GM12878 (cell line): ENCODE measurements at regions of chr17 and their contacts with region 1.

Region 1: GRCh38 chr17:77054936-77055335 is 85.8 kb upstream of the SEC14L1 start:
- DNase-seq: no peak
- ATAC-seq: no peak
- H3K4me3 ChIP-seq: no peak overlapping the region
- H3K27ac ChIP-seq: no peak overlapping the region
- H3K4me1 ChIP-seq: no peaks in the 10 kb centered on the region
- H3K27me3 ChIP-seq: peaks cover 0 to 4% of the 10 kb centered on the region in 2 experiments; a peak in 2 of 4 replicates
- CTCF ChIP-seq: no peak
- EP300 ChIP-seq: no peak
- POLR2A ChIP-seq: no peak
- RAD21 ChIP-seq: no peak

Region 2: GRCh38 chr17:76816590-76817135 is 238.3 kb before region 1 on chr17:
- CTCF ChIA-PET with region 1: interaction called, 10 read pairs
- POLR2A ChIA-PET with region 1: no interaction called
- RAD21 ChIA-PET with region 1: interaction called, 9 read pairs
- SMC1A ChIA-PET with region 1: interaction called, 7 read pairs
- in situ Hi-C with region 1: no loop called
- intact Hi-C with region 1: no loop called
- DNase-seq: no peak
- ATAC-seq: peak; percentile 88
- H3K4me3 ChIP-seq: no peak overlapping the region
- H3K27ac ChIP-seq: no peak overlapping the region
- H3K4me1 ChIP-seq: no peaks in the 10 kb centered on the region
- H3K27me3 ChIP-seq: no peaks in the 10 kb centered on the region
- CTCF ChIP-seq: peak; percentile 78 to 86 (median 78)
- EP300 ChIP-seq: no peak
- POLR2A ChIP-seq: no peak
- RAD21 ChIP-seq: peak; percentile 68

Region 3: GRCh38 chr17:76868176-76868668 is 186.7 kb before region 1 on chr17 and contains the start of gene MGAT5B:
- CTCF ChIA-PET with region 1: interaction called, 22 read pairs
- POLR2A ChIA-PET with region 1: no interaction called
- RAD21 ChIA-PET with region 1: interaction called, 22 read pairs
- SMC1A ChIA-PET with region 1: interaction called, 8 read pairs
- in situ Hi-C with region 1: no loop called
- intact Hi-C with region 1: loop called (anchors 2 kb)
- DNase-seq: no peak
- ATAC-seq: peak; percentile 99
- H3K4me3 ChIP-seq: no peak within 1 kb of the TSS
- H3K27ac ChIP-seq: no peak within 1 kb of the TSS
- H3K4me1 ChIP-seq: no peaks in the 10 kb centered on the region; the same call in 1 of the 2 replicates
- H3K27me3 ChIP-seq: peaks cover 0 to 5% of the 10 kb centered on the region in 2 experiments; a peak in 3 of 4 replicates
- CTCF ChIP-seq: peak; percentile 71 to 91 (median 74); a peak in 5 of 6 replicates
- EP300 ChIP-seq: no peak
- POLR2A ChIP-seq: no peak
- RAD21 ChIP-seq: peak; percentile 90
- polyA plus RNA-seq, gene MGAT5B: not detected

Region 4: DNA sequence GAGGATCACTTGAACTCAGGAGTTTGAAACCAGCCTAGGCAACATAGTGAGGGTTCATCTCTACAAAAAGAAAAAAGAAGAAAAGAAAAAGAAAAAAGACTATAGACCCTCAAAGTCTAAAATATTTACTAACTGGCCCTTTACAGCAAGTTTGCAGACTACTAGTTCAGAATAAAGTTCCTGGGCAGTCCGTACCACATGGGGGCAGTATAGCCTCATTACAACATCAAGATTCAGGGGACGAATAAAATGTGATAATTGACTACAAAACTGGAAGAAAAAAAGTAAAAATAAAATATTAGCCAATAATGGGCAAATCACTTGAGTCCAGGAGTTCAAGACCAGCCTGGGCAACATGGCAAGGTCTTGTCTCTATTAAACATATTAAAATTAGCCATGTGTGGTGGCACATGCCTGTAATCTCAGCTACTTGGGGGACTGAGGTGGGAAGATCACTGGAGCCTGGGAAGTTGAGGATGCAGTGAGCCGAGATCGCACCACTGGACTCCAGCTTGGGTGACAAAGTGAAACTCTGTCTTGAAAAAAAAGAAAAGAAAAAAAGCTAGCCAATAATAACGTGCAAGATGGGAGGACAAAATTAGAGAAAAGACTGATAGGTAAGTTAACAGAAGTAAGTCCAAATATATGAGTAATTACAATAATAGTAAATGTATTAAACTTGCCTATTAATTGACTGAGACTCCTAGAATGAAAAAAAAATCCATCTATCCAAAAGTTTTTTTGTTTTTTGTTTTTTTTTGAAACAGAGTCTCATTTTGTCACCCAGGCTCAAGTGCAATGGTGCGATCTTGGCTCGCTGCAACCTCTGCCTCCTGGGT is 43.5 kb before region 1 on chr17:
- CTCF ChIA-PET with region 1: interaction called, 19 read pairs
- POLR2A ChIA-PET with region 1: no interaction called
- RAD21 ChIA-PET with region 1: interaction called, 5 read pairs
- SMC1A ChIA-PET with region 1: interaction called, 5 read pairs
- in situ Hi-C with region 1: no loop called
- intact Hi-C with region 1: no loop called
- DNase-seq: no peak
- ATAC-seq: no peak
- H3K4me3 ChIP-seq: no peak overlapping the region
- H3K27ac ChIP-seq: no peak overlapping the region
- H3K4me1 ChIP-seq: no peaks in the 10 kb centered on the region
- H3K27me3 ChIP-seq: no peaks in the 10 kb centered on the region
- CTCF ChIP-seq: peak; percentile 38 to 53 (median 51)
- EP300 ChIP-seq: no peak
- POLR2A ChIP-seq: no peak
- RAD21 ChIP-seq: peak; percentile 52

Region 5: GRCh38 chr17:77068915-77069314 is 14.0 kb after region 1 on chr17:
- CTCF ChIA-PET with region 1: interaction called, 21 read pairs
- POLR2A ChIA-PET with region 1: no interaction called
- RAD21 ChIA-PET with region 1: interaction called, 8 read pairs
- SMC1A ChIA-PET with region 1: interaction called, 6 read pairs
- in situ Hi-C with region 1: no loop called
- intact Hi-C with region 1: no loop called
- DNase-seq: no peak
- ATAC-seq: no peak
- H3K4me3 ChIP-seq: no peak overlapping the region
- H3K27ac ChIP-seq: no peak overlapping the region
- H3K4me1 ChIP-seq: no peaks in the 10 kb centered on the region
- H3K27me3 ChIP-seq: peaks cover 0 to 3% of the 10 kb centered on the region in 2 experiments; a peak in 1 of 4 replicates
- CTCF ChIP-seq: no peak
- EP300 ChIP-seq: no peak
- POLR2A ChIP-seq: no peak
- RAD21 ChIP-seq: no peak